Right ventricle myocardium inferior (tissue), 1 donor: ENCODE measurements at regions of chr2 and their contacts with region 1.

Region 1: DNA sequence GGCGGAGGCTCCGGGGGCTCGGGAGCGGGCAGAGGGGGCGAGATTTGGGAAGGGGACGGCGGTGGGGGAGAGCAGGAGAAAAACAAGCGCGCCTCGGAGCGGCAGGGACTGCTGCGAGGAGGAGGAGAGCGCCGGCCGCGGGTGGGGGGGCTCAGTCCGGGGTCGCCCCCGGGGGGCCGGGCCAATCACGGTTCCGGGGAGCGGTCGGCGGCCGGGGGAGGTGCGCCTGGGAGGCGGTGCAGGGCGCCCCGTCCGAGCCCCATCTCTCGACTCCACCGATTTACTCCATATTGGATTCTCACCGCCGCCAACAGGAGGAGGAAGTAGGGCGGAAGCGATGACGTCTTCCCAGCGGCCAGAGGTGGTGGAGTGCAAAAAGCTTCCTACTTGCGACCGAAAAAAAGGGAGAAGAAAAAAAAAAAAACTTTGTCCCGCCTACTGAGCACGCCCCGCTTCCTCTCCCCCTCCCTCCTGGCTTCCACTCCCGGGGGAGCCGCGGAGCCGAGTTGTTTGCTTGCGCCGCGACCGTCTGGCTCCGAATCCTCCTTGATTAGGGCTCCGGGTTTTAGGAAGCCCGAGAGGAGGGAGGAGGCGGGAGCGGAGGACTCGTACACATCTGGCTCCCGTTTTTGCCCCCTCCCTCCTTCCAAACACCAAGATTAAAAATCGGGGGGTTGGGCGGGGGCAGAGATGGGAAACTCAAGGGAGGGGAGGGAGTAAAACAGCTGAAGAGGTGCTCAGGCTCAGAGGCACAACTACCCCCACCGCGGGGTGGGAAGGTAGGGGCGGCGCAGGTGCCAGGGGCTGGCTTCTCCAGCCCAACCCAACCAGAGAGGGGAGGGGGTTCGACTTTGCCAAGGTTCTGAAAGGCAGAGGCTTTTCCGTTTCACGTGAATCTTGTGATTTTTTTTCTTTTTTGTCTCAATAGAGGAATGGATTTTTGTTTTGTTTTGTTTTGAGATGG is at the start of gene SPRED2:
- DNase-seq: peak; percentile 97
- ATAC-seq: peak; percentile 74
- total RNA-seq, gene SPRED2: 14.0 TPM

Region 2: GRCh38 chr2:65064728-65065552 is 367.6 kb before region 1 on chr2:
- intact Hi-C with region 1: loop called (anchors 10 kb)
- DNase-seq: peak; percentile 81
- ATAC-seq: peak; percentile 84

Region 3: GRCh38 chr2:65264821-65265670 is 167.5 kb before region 1 on chr2:
- intact Hi-C with region 1: loop called (anchors 2 kb)
- DNase-seq: no peak
- ATAC-seq: peak; percentile 60

Region 4: GRCh38 chr2:65382776-65383357 is 49.6 kb before region 1 on chr2:
- intact Hi-C with region 1: loop called (anchors 2 kb)
- DNase-seq: peak; percentile 88
- ATAC-seq: peak; percentile 64

Region 5: DNA sequence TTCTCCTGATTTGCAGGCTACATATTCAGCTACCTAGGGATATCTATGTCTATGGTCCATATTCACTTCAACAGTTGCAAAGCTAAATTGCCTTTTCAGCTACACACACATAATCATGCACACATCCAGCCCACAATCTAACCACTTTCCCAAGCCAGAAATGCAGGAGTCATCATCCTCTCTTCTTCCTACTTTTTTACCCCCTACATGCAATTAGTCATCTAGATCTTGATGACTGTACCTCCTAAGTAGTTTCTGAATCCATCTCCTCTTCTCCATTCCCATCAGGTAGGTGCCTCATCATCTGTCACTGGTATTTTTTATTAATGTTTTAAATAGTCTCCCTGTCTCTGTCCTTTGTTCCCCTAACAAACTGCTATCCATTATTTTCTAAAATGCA is 23.6 kb after region 1 on chr2:
- intact Hi-C with region 1: no loop called
- DNase-seq: no peak
- ATAC-seq: no peak

Region 6: DNA sequence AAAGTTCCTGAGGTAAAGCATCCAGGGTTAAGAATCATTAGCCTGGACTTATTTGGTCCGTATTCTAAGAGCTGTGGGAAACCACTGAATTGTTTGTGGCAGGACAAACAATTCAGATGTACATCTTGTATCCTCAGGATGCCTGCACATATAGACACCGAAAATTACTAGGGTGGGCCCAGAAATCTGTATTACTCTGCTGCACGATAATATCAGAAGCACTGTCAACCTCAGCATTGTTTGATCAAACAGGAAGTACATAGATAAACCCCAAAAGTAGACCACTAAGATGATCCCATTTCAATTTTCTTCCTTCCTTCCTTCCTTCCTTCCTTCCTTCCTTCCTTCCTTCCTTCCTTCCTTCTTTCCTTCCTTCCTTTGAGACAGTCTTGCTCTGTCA is 34.0 kb after region 1 on chr2:
- intact Hi-C with region 1: no loop called
- DNase-seq: no peak
- ATAC-seq: no peak

Region 7: GRCh38 chr2:65553504-65554074 is 121.1 kb after region 1 on chr2:
- intact Hi-C with region 1: loop called (anchors 2 kb)
- DNase-seq: no peak
- ATAC-seq: no peak